ENCODE measurements at regions of chr7 and their contacts with region 1.

Region 1: DNA sequence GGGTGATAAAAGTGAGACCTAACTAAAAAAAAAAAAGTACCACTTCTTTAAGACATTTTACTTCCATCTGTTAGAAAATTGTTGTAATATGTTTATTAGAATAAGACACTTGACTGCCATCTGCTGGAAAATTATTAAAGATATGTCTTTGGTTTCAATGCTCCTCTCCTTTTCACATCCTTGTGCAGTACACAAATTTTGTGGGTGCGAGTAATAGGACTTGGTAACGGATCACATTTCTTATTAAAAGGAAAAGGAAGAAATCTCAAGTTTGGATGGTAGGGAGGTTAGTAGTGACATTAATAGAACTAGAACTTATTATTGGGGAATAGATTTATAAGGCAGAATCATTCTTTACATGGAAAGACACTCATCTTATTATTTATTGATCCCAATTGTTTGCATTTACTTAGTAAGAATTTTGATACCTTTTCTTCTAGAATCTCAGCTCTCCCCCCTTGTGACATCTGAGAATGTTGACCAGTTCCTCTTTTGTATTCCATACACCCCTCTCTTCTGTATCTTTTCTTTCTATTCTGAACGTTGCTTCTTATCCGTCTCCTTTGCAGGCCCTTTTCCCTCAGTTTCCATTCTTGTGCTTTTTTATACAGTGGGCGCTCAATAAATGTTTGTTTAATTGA is 43.1 kb upstream of the RPA3 start:
- DNase-seq: peak in 3 of 14 experiments; percentile 62 to 75 (median 73)
- ATAC-seq: peak; percentile 27
- H3K4me3 ChIP-seq: peak overlapping the region; percentile 55
- H3K4me3 Mint-ChIP-seq: peak overlapping the region; percentile 94
- H3K27ac ChIP-seq: peak overlapping the region; percentile 31 to 39
- H3K27ac Mint-ChIP-seq: peak overlapping the region; percentile 99
- H3K4me1 ChIP-seq: peaks cover 11% of the 10 kb centered on the region
- H3K4me1 Mint-ChIP-seq: peaks cover 51% of the 10 kb centered on the region
- H3K27me3 ChIP-seq: no peaks in the 10 kb centered on the region
- H3K27me3 Mint-ChIP-seq: no peaks in the 10 kb centered on the region
- CTCF ChIP-seq: peak; percentile 25

Region 2: DNA sequence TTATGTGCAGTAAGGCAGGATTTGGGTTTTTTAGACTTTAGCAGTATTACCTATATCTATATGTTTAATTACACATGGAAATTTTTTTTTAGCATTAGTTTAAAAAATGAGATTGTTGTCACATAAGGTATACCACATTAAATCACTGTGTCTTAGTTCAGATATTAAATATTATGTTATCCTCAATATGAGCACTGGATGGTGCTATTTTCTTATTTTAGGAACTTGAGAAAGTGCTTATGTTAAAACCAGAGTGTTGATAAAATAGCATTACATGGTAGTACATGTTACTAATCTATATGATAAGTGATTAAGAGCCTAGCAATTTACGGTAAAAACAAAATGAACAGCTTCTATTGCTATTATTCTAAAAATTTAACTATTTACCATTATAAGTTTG is 166.0 kb before region 1 on chr7:
- CTCF ChIA-PET with region 1: no interaction called
- POLR2A ChIA-PET with region 1: no interaction called
- intact Hi-C with region 1: loop called (anchors 5 kb)
- DNase-seq: peak in 3 of 14 experiments; percentile 56
- ATAC-seq: peak; percentile 58
- H3K4me3 ChIP-seq: no peak overlapping the region
- H3K4me3 Mint-ChIP-seq: no peak overlapping the region
- H3K27ac ChIP-seq: no peak overlapping the region
- H3K27ac Mint-ChIP-seq: no peak overlapping the region
- H3K4me1 ChIP-seq: no peaks in the 10 kb centered on the region
- H3K4me1 Mint-ChIP-seq: no peaks in the 10 kb centered on the region
- H3K27me3 ChIP-seq: no peaks in the 10 kb centered on the region
- H3K27me3 Mint-ChIP-seq: no peaks in the 10 kb centered on the region
- CTCF ChIP-seq: peak; percentile 54

Region 3: DNA sequence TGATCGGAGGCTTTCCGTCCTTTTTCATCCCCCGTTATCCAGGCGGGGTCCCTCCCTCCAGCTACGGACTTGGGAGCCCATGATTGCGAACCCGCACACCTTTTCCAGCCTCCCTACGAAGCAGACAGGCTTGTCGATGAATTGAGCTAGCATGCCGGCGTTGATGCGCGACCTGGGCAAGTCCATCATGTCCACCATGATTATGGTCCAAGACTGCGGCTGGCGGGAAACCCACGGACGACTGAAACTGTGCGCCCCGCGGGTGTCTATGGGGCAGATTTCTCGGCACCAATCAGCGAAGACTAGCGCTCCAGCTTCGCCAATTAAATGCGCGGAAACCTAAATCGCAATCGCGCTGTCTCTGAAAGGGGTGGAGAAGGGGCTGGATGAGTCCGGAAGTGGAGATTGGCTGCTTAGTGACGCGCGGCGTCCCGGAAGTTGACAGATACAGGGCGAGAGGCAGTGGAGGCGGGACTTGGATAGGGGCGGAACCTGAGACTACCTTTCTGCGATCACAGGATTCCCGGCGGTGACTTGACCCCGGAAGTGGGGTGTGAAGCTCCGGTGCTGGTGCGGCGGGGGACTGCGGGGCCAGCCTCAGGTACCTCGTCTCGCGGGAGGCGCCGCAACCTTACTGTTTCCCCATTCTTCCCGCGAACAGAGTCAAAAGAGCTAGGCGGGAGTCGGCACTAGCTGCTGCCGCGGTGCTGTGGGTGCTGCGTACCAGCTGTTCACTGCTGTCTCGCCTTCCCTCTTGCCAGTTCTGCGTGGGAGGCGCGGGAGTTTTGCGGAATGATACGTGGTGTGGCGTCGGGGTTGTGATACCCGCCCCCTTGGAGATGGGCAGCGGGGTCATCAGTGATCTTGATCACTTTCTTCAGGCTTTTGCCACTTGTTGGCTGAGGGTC is 121.0 kb before region 1 on chr7 and contains the start of gene UMAD1:
- CTCF ChIA-PET with region 1: no interaction called
- POLR2A ChIA-PET with region 1: interaction called, 14 read pairs
- intact Hi-C with region 1: loop called in 1 of 2 experiments (anchors 2 kb)
- DNase-seq: peak; percentile 94 to 100 (median 98)
- ATAC-seq: peak; percentile 83
- H3K4me3 ChIP-seq: peak within 1 kb of the TSS; percentile 88
- H3K4me3 Mint-ChIP-seq: peak within 1 kb of the TSS; percentile 90
- H3K27ac ChIP-seq: peak within 1 kb of the TSS; percentile 98 to 99
- H3K27ac Mint-ChIP-seq: peak within 1 kb of the TSS; percentile 98
- H3K4me1 ChIP-seq: peaks cover 17% of the 10 kb centered on the region
- H3K4me1 Mint-ChIP-seq: peaks cover 59% of the 10 kb centered on the region
- H3K27me3 ChIP-seq: no peaks in the 10 kb centered on the region
- H3K27me3 Mint-ChIP-seq: no peaks in the 10 kb centered on the region
- CTCF ChIP-seq: no peak
- total RNA-seq, gene UMAD1: 11.0 to 15.3 TPM

Region 4: GRCh38 chr7:7772397-7772821 is 10.9 kb after region 1 on chr7:
- CTCF ChIA-PET with region 1: interaction called, 5 read pairs
- POLR2A ChIA-PET with region 1: interaction called, 3 read pairs
- intact Hi-C with region 1: loop called in 1 of 2 experiments (anchors 2 kb)
- DNase-seq: peak in 1 of 14 experiments; percentile 7
- ATAC-seq: peak; percentile 52
- H3K4me3 ChIP-seq: peak overlapping the region; percentile 1
- H3K4me3 Mint-ChIP-seq: peak overlapping the region; percentile 85
- H3K27ac ChIP-seq: no peak overlapping the region
- H3K27ac Mint-ChIP-seq: peak overlapping the region; percentile 45
- H3K4me1 ChIP-seq: peaks cover 3% of the 10 kb centered on the region
- H3K4me1 Mint-ChIP-seq: peaks cover 44% of the 10 kb centered on the region
- H3K27me3 ChIP-seq: no peaks in the 10 kb centered on the region
- H3K27me3 Mint-ChIP-seq: no peaks in the 10 kb centered on the region
- CTCF ChIP-seq: no peak

Region 5: DNA sequence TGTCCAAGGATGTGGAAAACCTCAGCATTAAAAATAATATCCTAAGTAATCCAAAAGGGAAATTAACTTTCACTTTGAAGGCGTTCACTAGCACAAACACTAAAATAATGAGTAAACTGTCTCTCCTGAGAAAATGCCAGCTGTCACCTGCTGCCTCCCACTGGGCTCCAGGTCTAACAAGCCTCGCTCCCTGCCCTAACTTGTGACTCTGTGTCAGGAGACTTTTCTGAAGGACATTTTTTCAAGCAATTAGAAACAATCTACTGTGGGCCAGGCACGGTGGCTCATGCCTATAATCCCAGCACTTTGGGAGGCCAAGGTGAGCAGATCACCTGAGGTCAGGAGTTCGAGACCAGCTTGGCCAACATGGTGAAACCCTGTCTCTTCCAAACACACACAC is 134.3 kb after region 1 on chr7:
- CTCF ChIA-PET with region 1: no interaction called
- POLR2A ChIA-PET with region 1: no interaction called
- intact Hi-C with region 1: no loop called
- DNase-seq: no peak
- ATAC-seq: no peak
- H3K4me3 ChIP-seq: no peak overlapping the region
- H3K4me3 Mint-ChIP-seq: no peak overlapping the region
- H3K27ac ChIP-seq: no peak overlapping the region
- H3K27ac Mint-ChIP-seq: no peak overlapping the region
- H3K4me1 ChIP-seq: no peaks in the 10 kb centered on the region
- H3K4me1 Mint-ChIP-seq: no peaks in the 10 kb centered on the region
- H3K27me3 ChIP-seq: no peaks in the 10 kb centered on the region
- H3K27me3 Mint-ChIP-seq: no peaks in the 10 kb centered on the region
- CTCF ChIP-seq: no peak

Region 6: GRCh38 chr7:7920481-7920880 is 159.0 kb after region 1 on chr7:
- CTCF ChIA-PET with region 1: no interaction called
- POLR2A ChIA-PET with region 1: no interaction called
- intact Hi-C with region 1: no loop called
- DNase-seq: peak in 3 of 14 experiments; percentile 52 to 77 (median 69)
- ATAC-seq: peak; percentile 81
- H3K4me3 ChIP-seq: peak overlapping the region; percentile 37
- H3K4me3 Mint-ChIP-seq: peak overlapping the region; percentile 82
- H3K27ac ChIP-seq: no peak overlapping the region
- H3K27ac Mint-ChIP-seq: no peak overlapping the region
- H3K4me1 ChIP-seq: peaks cover 8% of the 10 kb centered on the region
- H3K4me1 Mint-ChIP-seq: peaks cover 43% of the 10 kb centered on the region
- H3K27me3 ChIP-seq: no peaks in the 10 kb centered on the region
- H3K27me3 Mint-ChIP-seq: no peaks in the 10 kb centered on the region
- CTCF ChIP-seq: no peak

Region 7: DNA sequence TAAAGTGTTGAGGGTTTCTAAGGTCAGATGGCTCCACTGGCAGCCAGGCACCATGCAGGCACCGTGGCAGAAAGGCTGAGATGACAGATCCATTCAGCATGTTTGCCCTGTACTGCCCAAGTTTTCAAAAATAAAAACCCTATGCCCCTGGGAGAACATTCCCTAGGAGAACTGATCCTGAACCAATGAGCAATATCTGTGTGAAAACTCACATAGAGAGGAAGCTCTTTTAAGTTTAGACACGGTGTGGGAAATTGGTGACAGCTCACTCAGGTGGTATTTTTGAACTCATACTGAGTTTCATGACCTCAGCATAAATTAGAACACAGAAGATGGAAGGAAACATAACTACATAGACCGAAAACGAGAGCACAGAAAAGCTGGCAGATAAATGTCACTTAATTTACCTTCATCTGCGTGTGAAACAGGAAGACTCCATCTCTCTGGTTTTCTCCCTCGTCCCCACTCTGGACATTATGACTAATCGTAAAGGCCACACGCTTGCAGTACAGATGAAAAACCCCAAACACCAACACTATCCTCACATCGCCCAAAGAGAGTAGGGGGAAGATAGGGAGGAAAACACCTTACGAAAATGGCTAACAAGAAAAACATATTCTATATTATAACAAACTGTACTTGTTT is 372.8 kb after region 1 on chr7:
- CTCF ChIA-PET with region 1: no interaction called
- POLR2A ChIA-PET with region 1: interaction called, 3 read pairs
- intact Hi-C with region 1: loop called in 1 of 2 experiments (anchors 5 kb)
- DNase-seq: peak in 4 of 14 experiments; percentile 34 to 73 (median 64)
- ATAC-seq: peak; percentile 33
- H3K4me3 ChIP-seq: no peak overlapping the region
- H3K4me3 Mint-ChIP-seq: peak overlapping the region; percentile 25
- H3K27ac ChIP-seq: peak overlapping the region; percentile 36 to 79
- H3K27ac Mint-ChIP-seq: peak overlapping the region; percentile 96
- H3K4me1 ChIP-seq: peaks cover 56% of the 10 kb centered on the region
- H3K4me1 Mint-ChIP-seq: peaks cover 79% of the 10 kb centered on the region
- H3K27me3 ChIP-seq: no peaks in the 10 kb centered on the region
- H3K27me3 Mint-ChIP-seq: no peaks in the 10 kb centered on the region
- CTCF ChIP-seq: no peak

Region 8: GRCh38 chr7:8190119-8190895 is 428.8 kb after region 1 on chr7:
- CTCF ChIA-PET with region 1: interaction called, 7 read pairs
- POLR2A ChIA-PET with region 1: interaction called, 3 read pairs
- intact Hi-C with region 1: loop called (anchors 5 kb)
- DNase-seq: peak; percentile 40 to 85 (median 66)
- ATAC-seq: peak; percentile 97
- H3K4me3 ChIP-seq: no peak overlapping the region
- H3K4me3 Mint-ChIP-seq: no peak overlapping the region
- H3K27ac ChIP-seq: no peak overlapping the region
- H3K27ac Mint-ChIP-seq: peak overlapping the region; percentile 24
- H3K4me1 ChIP-seq: peaks cover 8% of the 10 kb centered on the region
- H3K4me1 Mint-ChIP-seq: peaks cover 32% of the 10 kb centered on the region
- H3K27me3 ChIP-seq: no peaks in the 10 kb centered on the region
- H3K27me3 Mint-ChIP-seq: no peaks in the 10 kb centered on the region
- CTCF ChIP-seq: peak; percentile 86

Region 9: DNA sequence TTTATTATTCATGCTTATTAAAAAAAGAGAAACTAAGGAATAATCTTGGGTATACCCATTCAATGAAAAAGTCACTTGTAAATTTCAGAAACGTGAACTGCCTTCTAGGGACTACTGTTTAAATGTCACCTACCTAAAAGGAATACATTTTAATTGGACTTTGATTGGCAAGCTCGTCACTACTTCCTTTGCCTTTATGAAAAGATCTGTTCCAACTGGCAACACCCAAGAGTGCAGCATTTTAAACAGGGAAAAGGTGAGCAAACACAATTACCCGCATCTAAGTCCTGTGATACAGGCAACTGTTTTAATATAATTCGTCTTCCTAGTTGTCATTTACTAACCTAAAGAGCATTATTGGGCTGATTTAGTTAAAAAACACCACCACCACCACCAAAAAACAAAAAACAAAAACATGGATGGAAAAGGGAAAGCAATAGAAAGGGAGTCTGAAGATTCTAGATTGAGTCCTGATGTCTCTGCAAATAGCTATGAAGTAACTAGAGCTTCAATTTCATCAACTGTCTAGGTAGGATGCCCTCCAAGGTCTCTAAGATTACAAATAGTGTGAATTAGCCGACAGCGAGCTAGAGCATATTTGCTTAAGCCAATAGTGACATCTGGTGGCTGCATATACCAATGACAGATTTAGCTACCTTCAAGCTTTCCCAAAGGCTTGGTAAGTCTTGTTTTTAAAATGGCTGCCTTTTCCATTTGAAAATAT is 534.3 kb after region 1 on chr7:
- CTCF ChIA-PET with region 1: no interaction called
- POLR2A ChIA-PET with region 1: no interaction called
- intact Hi-C with region 1: loop called in 1 of 2 experiments (anchors 2 kb)
- DNase-seq: peak in 8 of 14 experiments; percentile 3 to 81 (median 18)
- ATAC-seq: peak; percentile 84
- H3K4me3 ChIP-seq: no peak overlapping the region
- H3K4me3 Mint-ChIP-seq: no peak overlapping the region
- H3K27ac ChIP-seq: no peak overlapping the region
- H3K27ac Mint-ChIP-seq: no peak overlapping the region
- H3K4me1 ChIP-seq: no peaks in the 10 kb centered on the region
- H3K4me1 Mint-ChIP-seq: no peaks in the 10 kb centered on the region
- H3K27me3 ChIP-seq: peaks cover 6 to 7% of the 10 kb centered on the region in 2 experiments
- H3K27me3 Mint-ChIP-seq: peaks cover 13% of the 10 kb centered on the region
- CTCF ChIP-seq: peak; percentile 71